Head of caudate nucleus (tissue), 42 donors: ENCODE measurements at regions of chr3 and their contacts with region 1.

Region 1: DNA sequence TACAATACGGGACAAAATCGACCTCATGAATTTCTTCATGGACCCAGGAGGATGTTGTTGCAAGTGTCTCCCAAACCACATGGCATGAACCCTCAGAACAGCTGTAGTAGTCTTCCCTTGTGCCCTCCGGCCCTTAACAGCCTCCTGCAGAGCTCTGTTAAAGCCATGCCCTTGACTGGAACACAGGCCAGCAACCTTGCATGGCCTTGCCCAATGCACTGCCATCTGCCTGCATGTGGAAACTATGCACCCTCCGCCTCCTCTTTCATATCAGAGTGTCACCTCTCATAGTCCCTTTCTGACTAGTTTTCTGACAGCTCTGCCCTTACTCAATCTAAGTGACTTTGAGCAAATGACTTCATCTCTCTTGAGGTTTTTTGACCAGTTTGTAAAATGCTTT is 39.4 kb upstream of the TRIM71 start:
- DNase-seq: no peak

Region 2: DNA sequence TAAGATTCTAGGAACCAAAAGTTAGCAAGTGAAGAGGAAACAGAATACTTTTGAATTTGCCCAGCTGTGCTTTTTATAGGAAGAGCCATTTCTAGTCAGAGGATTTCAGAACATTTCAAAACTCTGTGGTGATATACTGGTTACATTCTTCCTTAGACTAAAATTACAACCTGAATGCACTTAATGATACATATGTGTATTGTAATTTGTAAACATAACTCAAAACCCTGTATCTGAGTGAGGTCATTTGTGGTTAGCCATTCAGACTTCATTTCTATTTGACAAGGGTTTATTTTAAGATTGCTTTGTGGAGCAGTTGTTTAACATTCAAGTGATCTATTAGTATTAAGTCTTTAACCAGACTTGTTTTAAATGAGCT is 20.0 kb before region 1 on chr3:
- intact Hi-C with region 1: loop called (anchors 2 kb)
- DNase-seq: no peak

Region 3: DNA sequence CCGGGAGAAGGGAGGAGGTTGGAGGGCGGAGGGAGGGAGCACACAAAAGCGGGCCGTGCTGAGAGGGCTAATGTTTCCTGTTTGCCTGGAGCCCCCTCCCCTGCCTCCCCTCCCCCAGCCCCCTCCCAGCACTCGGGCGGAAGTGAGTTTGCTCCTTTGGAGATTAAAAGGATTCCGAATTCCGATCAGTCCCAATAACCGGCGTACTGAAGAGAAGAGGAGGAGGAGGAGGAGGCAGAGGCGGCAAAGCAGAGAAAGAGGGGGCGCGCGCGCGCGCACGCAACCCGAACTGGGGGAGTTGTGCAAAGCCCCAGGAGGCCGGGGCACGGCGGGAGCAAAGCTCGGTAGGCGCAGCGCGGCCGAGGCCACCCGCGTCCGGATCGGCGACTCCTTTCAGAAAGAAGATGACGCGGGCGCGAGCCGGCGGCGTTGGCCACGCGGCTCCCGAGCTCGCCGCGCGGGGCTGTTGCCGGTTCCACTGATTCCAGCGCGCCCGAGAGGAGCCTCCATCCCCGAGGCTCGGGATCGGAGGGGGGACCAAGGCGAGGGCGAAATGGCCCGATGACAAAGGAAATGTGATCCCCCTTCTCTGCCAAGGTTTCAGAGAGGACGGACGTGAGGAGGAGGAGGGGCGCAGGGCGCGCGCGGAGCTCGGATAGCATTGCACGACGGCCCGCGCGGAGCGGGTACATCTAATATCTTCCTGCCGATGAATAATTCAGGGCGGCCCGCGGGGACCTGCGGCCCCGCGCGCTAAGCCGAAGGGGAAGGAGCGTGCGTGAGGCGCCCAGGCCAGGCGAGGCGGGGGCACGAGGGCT is 38.3 kb after region 1 on chr3:
- intact Hi-C with region 1: no loop called
- DNase-seq: peak in 37 of 42 donors; percentile 13 to 79 (median 50)